Activated CD4-positive, alpha-beta memory T cell treated with anti-CD3 and anti-CD28 coated beads, Interleukin-2, amount 10 ng/mL, durations not matched to agents 7 days and 5 days (primary cell): ENCODE measurements at regions of chr17 and their contacts with region 1.

Region 1: GRCh38 chr17:42112552-42113176 is at the start of gene DHX58:
- DNase-seq: peak; percentile 87
- H3K4me3 Mint-ChIP-seq: peak within 1 kb of the TSS; percentile 91
- H3K27ac Mint-ChIP-seq: peak within 1 kb of the TSS; percentile 98
- H3K4me1 Mint-ChIP-seq: peaks cover 72% of the 10 kb centered on the region
- H3K27me3 Mint-ChIP-seq: no peaks in the 10 kb centered on the region
- total RNA-seq, gene DHX58: 97.0 to 97.3 TPM

Region 2: DNA sequence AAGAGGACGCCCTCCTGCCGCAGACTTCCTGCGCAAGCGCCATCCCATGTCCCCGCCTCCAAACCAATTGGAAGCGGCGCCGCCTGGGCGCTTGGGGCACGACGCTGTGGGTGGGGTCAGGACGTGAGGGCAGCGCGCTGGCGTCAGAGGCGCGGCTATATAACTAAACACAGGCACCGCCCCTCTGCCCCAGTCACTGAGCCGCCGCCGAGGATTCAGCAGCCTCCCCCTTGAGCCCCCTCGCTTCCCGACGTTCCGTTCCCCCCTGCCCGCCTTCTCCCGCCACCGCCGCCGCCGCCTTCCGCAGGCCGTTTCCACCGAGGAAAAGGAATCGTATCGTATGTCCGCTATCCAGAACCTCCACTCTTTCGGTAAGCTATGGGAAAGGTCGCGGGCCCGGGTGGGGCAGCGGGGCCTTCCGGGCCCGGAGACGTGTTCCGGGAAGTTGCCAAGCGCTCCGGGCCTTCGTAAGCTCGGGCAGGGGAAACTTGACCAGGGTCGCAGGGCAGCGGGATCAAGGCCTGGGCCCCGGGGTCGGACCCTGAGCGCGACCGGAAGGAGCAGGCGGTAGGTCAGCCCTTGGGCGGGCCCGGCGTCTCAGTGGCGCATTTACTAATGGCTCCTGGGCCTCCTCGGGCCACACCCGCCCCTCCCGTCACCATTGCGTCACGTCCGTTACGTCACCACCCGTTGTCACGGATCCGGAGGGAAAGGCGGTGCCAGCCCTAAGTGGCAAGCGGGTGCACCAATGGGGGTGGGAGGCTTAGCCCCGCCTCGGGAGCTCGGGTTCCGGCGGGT is 423.8 kb before region 1 on chr17 and contains the start of gene EIF1:
- CTCF ChIA-PET with region 1: no interaction called
- POLR2A ChIA-PET with region 1: interaction called, 13 read pairs
- DNase-seq: peak; percentile 100
- H3K4me3 Mint-ChIP-seq: peak within 1 kb of the TSS; percentile 88
- H3K27ac Mint-ChIP-seq: peak within 1 kb of the TSS; percentile 98
- H3K4me1 Mint-ChIP-seq: peaks cover 39% of the 10 kb centered on the region
- H3K27me3 Mint-ChIP-seq: no peaks in the 10 kb centered on the region
- total RNA-seq, gene EIF1: 933 to 950 TPM

Region 3: DNA sequence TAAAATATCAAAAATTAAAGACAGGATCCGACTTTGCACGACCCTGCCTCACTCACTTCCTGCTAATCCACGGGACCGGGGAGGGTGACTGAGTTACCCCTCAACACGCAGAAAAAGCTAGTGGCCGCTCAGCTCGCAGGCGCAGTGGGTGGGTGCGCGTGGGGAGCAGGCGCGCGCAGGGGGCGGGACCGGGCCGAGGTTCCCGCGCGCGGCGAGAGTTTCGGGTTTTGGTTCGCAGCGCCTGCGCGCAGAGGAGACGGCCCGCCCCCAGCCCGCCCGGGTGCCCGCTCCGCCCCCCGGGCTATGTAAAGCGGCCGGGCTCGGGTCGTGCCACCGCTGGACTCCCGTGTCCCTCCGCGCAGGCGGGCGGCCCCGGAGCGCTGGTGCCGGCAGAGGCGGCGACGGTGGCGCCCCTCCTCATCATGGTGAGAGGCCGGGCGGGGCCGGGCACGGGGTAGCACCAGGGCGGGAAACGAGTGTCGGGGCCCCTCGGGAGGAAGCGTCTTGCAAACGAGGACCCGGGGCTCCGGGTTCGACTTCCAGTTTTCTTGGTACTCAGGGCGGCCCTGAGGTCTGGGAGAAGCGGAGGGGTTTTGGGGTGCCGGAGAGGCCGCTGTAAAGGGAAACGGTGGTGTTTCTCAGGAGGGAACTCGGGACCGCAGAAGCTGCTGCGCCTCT is 146.1 kb before region 1 on chr17 and contains the start of gene CNP:
- CTCF ChIA-PET with region 1: interaction called, 19 read pairs
- POLR2A ChIA-PET with region 1: interaction called, 118 read pairs
- DNase-seq: peak; percentile 93
- H3K4me3 Mint-ChIP-seq: peak within 1 kb of the TSS; percentile 81
- H3K27ac Mint-ChIP-seq: peak within 1 kb of the TSS; percentile 84
- H3K4me1 Mint-ChIP-seq: peaks cover 50% of the 10 kb centered on the region
- H3K27me3 Mint-ChIP-seq: no peaks in the 10 kb centered on the region
- total RNA-seq, gene CNP: 89.8 to 91.0 TPM

Region 4: GRCh38 chr17:42101513-42102319 is 10.9 kb before region 1 on chr17:
- CTCF ChIA-PET with region 1: interaction called, 10 read pairs
- POLR2A ChIA-PET with region 1: interaction called, 14 read pairs
- DNase-seq: peak; percentile 72
- H3K4me3 Mint-ChIP-seq: no peak overlapping the region
- H3K27ac Mint-ChIP-seq: no peak overlapping the region
- H3K4me1 Mint-ChIP-seq: peaks cover 7% of the 10 kb centered on the region
- H3K27me3 Mint-ChIP-seq: peaks cover 14% of the 10 kb centered on the region

Region 5: DNA sequence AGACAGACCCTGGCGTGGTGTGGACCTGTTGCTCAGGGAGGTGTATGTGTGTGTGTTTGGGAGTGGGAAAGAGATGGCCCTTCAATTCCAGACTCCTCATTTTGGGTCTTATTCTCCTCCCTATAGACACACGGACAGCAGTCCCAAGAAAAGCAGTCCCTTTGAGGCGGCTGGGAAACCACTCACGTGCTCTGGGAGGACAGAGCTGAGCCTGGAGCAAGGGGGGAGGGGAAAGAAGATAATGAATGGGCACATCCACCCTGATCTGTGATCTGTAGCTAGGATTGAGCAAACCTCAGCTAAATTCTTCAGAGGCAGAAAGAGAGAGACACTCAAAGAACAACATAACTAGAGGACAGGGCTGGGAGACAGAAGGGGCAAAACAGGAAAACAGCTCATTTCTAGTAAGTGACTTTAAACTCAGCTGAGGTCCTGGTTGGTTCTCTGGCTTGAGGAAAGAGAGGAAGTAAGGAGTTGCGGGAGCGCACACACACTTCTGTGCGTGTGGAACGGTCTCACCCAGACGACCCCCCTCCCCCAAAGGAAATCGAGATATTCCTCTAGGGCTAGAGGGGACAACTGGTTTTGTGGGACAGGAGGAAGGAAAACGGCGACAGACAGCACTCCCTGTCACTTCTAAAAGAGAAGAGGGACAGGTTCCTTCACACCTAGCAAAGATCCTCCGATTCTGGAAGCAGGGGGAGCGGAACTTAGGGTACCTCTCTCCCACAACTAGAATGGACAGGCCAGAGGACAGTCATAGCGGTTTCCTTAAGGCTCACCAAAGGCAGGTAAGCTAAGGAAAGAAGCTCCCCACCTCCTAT is 41.5 kb after region 1 on chr17:
- CTCF ChIA-PET with region 1: no interaction called
- POLR2A ChIA-PET with region 1: interaction called, 30 read pairs
- DNase-seq: no peak
- H3K4me3 Mint-ChIP-seq: peak overlapping the region; percentile 92
- H3K27ac Mint-ChIP-seq: peak overlapping the region; percentile 86
- H3K4me1 Mint-ChIP-seq: peaks cover 45% of the 10 kb centered on the region
- H3K27me3 Mint-ChIP-seq: no peaks in the 10 kb centered on the region

Region 6: GRCh38 chr17:42287926-42288802 is 175.5 kb after region 1 on chr17 and contains the start of gene STAT5A:
- CTCF ChIA-PET with region 1: no interaction called
- POLR2A ChIA-PET with region 1: interaction called, 13 read pairs
- DNase-seq: peak; percentile 86
- H3K4me3 Mint-ChIP-seq: peak within 1 kb of the TSS; percentile 89
- H3K27ac Mint-ChIP-seq: peak within 1 kb of the TSS; percentile 86
- H3K4me1 Mint-ChIP-seq: peaks cover 59% of the 10 kb centered on the region
- H3K27me3 Mint-ChIP-seq: no peaks in the 10 kb centered on the region
- total RNA-seq, gene STAT5A: 88.4 to 96.7 TPM

Region 7: DNA sequence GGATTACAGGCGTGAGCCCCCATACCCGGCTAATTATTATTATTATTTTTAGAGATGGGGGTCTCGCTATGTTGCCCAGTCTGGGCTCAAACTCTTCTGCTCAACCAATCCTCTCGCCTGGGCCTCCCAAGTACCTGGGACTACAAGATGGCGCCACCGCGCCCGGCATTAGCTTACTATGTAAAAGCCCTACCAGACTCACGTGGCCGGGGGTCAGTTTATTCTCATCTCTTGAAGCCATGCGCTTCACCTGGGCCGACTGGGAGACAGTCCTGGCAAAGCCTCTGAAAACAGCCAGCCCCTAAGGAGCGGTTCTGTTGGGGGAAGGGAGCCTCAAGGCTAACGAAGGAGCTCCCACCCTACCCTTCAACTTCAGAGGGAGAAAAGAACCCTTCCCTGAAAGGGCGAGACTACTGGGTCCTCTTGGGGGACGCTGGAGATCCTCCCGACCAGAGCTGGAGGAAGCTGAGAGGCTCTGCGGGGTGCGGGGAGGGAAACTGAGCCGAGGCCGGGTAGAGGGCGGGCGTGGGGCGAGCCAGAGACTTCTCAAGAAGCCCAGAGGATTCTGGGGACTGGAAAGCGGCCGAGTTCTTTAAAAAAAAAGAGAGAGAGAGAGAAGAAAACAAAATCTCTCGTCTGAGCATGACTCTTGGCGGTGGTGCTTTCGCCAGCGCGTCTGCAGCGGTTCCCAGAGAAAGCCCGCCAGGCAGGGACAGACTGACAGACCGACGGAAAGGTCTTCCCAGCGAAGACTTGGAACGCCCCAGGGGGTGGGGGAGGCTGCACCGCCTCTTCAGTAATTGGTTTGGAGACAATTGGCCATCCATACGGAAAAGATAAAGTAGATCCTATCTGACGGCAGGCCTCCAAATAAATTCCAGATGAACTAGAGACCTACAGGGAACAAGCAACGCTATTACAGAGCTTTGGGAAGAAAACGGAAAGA is 540.8 kb after region 1 on chr17:
- CTCF ChIA-PET with region 1: no interaction called
- POLR2A ChIA-PET with region 1: no interaction called
- DNase-seq: no peak
- H3K4me3 Mint-ChIP-seq: no peak overlapping the region
- H3K27ac Mint-ChIP-seq: no peak overlapping the region
- H3K4me1 Mint-ChIP-seq: peaks cover 18% of the 10 kb centered on the region
- H3K27me3 Mint-ChIP-seq: peaks cover 24% of the 10 kb centered on the region